Heart left ventricle (tissue), 16 donors: ENCODE measurements at regions of chr10 and their contacts with region 1.

Region 1: GRCh38 chr10:73117976-73118743 is 7.9 kb downstream of the NUDT13 start:
- DNase-seq: no peak
- ATAC-seq: peak; percentile 84 to 90 (median 88)
- H3K4me3 ChIP-seq: peak overlapping the region in 1 of 12 donors; percentile 10
- H3K27ac ChIP-seq: peak overlapping the region; percentile 76 to 94 (median 82)
- H3K4me1 ChIP-seq: peaks cover 0 to 30% (median 9%) of the 10 kb centered on the region in 12 donors
- H3K27me3 ChIP-seq: no peaks in the 10 kb centered on the region
- CTCF ChIP-seq: no peak
- POLR2A ChIP-seq: peak in 1 of 2 donors; percentile 28

Region 2: GRCh38 chr10:73079779-73080541 is 38.2 kb before region 1 on chr10:
- intact Hi-C with region 1: loop called in 1 of 10 experiments (anchors 5 kb)
- DNase-seq: no peak
- ATAC-seq: no peak
- H3K4me3 ChIP-seq: no peak overlapping the region
- H3K27ac ChIP-seq: no peak overlapping the region
- H3K4me1 ChIP-seq: peaks cover 0 to 64% (median 34%) of the 10 kb centered on the region in 12 donors
- H3K27me3 ChIP-seq: no peaks in the 10 kb centered on the region
- CTCF ChIP-seq: no peak
- POLR2A ChIP-seq: no peak